ENCODE measurements at regions of chr12 and their contacts with region 1.

Region 1: DNA sequence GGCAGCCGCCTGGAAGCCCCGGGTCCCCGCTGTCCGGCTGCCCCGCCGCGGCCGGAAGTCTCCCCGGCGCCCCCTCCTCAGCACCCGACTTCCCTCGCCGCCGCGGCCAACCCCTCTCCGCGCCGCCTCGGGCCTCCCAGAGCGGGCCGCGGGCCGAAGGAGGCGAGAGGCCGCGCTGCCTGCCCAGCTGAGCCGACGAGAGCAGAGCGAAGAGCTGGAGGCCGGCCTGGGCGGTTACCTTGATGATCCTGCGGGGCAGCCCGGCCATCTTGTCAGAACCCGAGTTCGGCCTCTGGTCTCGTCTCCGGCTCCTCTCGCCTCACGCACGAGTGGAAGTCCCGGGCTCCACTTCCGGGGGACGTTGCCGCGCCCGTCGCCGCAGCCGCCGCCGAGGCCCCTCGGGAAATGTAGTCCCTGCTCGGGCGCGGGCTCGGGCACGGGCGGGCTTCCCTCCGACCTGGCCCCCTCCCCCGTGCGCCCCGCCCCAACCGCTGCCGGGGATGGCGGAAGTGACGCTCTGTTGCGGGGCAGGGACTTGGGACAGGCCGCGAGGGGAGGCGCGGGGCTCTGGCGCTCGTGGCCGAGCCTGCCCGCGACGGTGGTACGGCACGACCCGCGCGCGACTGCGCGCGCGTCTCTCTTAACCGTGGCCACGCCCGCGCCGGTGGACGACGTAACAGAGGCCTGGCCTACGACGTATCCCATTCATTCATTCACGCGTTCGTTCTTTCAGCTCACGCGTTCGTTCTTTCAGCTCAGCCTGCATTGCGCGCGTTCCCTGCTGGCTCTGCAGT is at the start of gene UBE2N:
- DNase-seq: peak; percentile 94
- H3K4me3 Mint-ChIP-seq: peak within 1 kb of the TSS; percentile 98
- H3K27ac Mint-ChIP-seq: peak within 1 kb of the TSS; percentile 95
- H3K4me1 Mint-ChIP-seq: peaks cover 38% of the 10 kb centered on the region
- H3K27me3 Mint-ChIP-seq: no peaks in the 10 kb centered on the region
- total RNA-seq, gene UBE2N: 258 and 261 TPM in 2 replicates

Region 2: GRCh38 chr12:93387780-93388179 is 54.0 kb before region 1 on chr12:
- intact Hi-C with region 1: no loop called
- DNase-seq: no peak
- H3K4me3 Mint-ChIP-seq: no peak overlapping the region
- H3K27ac Mint-ChIP-seq: peak overlapping the region; percentile 72
- H3K4me1 Mint-ChIP-seq: peaks cover 41% of the 10 kb centered on the region
- H3K27me3 Mint-ChIP-seq: no peaks in the 10 kb centered on the region

Region 3: GRCh38 chr12:93467351-93468007 is 25.7 kb after region 1 on chr12 and contains the start of gene MRPL42:
- intact Hi-C with region 1: loop called (anchors 1 kb)
- DNase-seq: peak; percentile 91
- H3K4me3 Mint-ChIP-seq: peak within 1 kb of the TSS; percentile 86
- H3K27ac Mint-ChIP-seq: peak within 1 kb of the TSS; percentile 86
- H3K4me1 Mint-ChIP-seq: peaks cover 29% of the 10 kb centered on the region
- H3K27me3 Mint-ChIP-seq: no peaks in the 10 kb centered on the region
- total RNA-seq, gene MRPL42: 80.5 and 89.3 TPM in 2 replicates

Region 4: DNA sequence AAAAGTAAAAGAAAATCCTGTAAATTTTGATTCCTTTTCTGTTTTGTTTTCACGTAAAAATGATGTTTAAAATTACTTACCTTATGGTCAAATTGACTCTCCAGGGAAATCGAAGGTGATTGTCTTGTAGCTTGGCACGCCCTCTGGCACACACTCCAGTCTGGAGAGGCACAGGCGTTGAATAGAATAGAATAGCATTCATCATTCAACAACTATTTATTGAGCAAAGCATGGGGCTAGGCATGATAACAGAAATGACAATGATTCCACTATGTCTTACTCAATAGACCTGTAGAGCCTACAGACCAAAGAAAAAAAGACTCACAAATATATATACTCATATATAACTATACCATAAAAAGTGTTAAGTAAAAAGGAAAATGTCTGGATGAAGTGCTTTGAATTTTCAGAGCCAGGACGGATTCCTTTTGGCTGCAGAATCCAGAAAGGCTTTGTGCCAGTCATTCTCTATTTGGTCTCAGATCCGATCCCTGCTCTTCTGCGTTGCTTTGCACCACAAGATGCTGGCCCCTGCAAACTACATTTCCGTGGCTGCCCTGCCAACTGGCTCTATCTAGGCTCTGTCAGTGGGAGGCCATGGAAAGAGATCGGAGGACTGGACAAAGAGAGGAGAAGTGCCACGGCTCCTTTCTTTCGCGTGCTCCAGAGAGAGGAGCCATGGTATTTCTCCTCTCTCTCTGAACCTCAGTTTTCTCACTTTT is 467.2 kb after region 1 on chr12:
- intact Hi-C with region 1: no loop called
- DNase-seq: no peak
- H3K4me3 Mint-ChIP-seq: no peak overlapping the region
- H3K27ac Mint-ChIP-seq: no peak overlapping the region
- H3K4me1 Mint-ChIP-seq: peaks cover 9% of the 10 kb centered on the region
- H3K27me3 Mint-ChIP-seq: peaks cover 3% of the 10 kb centered on the region